GM13976 (cell line): ENCODE measurements at regions of chr10 and their contacts with region 1.

Region 1: GRCh38 chr10:13787015-13787421 is 200.3 kb downstream of the PRPF18 start:
- DNase-seq: peak; percentile 73
- CTCF ChIP-seq: no peak

Region 2: DNA sequence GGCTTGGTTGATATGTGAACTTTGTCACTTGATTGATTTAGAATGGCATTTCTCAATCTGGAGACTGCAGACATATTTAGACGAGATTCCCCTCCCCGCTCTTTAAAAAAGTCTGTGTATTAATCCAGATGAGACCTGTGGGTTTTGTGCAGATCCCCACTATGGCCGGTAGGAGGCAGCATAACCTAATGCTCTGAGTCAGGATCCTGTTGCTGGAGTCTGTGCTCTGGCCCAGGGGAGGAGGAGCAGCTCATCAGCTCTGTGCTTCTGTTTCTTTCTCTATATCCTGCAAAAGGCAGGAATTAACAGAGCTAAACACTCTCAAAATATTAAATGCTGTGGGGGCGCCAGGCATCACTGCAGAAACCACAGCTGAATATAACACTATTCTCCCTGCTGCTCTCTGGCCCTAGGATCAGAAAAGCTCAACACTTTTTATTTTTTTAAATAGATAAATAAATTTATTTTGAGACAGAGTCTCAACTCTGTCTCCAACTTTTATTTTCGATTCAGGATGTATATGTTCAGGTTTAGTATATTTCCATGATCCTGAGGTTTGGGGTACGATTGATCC is 415.0 kb before region 1 on chr10:
- in situ Hi-C with region 1: loop called (anchors 25 kb)
- DNase-seq: peak; percentile 86
- CTCF ChIP-seq: peak; percentile 82

Region 3: GRCh38 chr10:13536674-13537366 is 250.2 kb before region 1 on chr10:
- in situ Hi-C with region 1: no loop called
- DNase-seq: peak; percentile 64
- CTCF ChIP-seq: peak; percentile 34